HEK293 (cell line): ENCODE measurements at regions of chr11 and their contacts with region 1.

Region 1: DNA sequence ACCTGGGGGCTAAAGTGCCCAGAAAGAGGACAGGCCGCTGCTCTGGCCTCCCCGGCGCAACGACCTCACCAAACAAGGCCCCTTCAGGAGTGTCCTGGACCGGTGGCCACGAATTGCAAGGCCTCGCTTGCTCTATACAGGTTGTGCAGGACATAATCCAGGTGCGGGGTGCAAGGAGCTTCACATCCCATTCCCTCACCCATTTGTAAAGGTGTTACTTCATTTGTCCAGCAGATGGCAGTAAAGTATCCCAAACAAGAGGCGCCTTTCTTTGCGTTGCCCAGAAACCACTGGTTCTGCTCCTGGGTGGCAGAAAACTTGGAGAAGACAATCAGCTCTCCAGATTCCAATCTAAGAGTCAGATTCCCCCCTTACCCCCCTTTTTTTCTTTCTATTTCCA is 35.9 kb upstream of the PRDM11 start:
- H3K4me3 ChIP-seq: no peak overlapping the region
- H3K27ac ChIP-seq: no peak overlapping the region
- H3K4me1 ChIP-seq: no peaks in the 10 kb centered on the region
- CTCF ChIP-seq: peak; percentile 26; the same call in 1 of the 2 replicates

Region 2: DNA sequence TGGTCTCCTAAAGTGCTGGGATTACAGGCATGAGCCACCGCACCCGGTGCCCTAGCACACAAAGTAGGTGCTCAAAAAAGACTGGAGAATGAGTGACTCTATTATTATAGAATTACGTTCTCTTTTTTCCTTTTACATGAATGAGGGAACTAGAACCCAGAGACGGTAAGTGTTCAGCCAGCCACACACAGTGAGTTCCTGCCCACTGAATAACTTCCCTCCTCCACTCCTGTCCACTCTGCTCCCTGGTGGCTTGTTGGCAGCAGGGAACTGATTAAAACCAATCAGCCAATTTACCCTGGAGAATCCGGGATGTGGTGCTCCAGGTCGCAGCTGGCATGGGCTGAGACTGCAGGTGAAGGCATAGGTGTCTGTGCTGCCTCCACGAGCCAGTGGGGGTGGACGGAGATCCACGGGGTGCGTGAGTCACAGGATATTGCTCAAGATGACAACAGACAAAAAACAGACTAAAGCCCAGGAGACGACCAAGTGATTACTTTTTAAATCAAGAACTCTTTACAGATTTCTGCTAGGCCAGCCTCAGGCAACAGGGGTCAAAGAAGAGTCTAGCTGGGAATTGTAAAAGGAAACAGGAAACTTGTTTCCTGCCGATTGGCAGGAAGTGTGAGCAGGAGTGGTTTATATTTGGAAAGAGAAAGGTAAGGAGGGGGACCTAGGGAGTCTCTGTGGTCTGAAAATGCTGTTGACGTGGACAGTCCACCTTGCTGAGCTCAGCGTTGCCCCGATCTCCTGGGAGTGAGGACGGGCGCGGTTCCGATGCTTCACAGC is 64.7 kb before region 1 on chr11:
- CTCF ChIA-PET with region 1: no interaction called
- POLR2A ChIA-PET with region 1: no interaction called
- H3K4me3 ChIP-seq: no peak overlapping the region
- H3K27ac ChIP-seq: no peak overlapping the region
- H3K4me1 ChIP-seq: no peaks in the 10 kb centered on the region
- CTCF ChIP-seq: no peak

Region 3: DNA sequence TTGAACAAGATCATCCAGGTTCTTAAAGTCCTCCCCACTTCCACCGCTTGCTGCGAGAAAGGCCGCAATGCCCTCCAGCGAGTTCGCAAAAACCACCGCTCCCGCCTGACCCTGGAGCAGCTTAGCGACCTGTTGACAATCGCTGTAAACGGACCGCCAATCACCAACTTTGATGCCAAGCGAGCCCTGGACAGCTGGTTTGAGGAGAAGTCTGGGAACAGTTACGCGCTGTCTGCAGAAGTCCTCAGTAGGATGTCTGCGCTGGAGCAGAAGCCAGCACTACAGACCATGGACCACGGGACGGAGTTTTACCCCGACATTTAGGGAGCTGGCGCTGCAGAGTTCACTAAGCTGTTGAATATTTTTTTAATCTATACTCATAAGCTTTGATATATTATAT is 117.3 kb after region 1 on chr11:
- CTCF ChIA-PET with region 1: interaction called, 17 read pairs
- POLR2A ChIA-PET with region 1: no interaction called
- H3K4me3 ChIP-seq: no peak overlapping the region
- H3K27ac ChIP-seq: no peak overlapping the region
- H3K4me1 ChIP-seq: no peaks in the 10 kb centered on the region
- CTCF ChIP-seq: no peak

Region 4: GRCh38 chr11:45252134-45252855 is 141.7 kb after region 1 on chr11:
- CTCF ChIA-PET with region 1: interaction called, 19 read pairs
- POLR2A ChIA-PET with region 1: no interaction called
- H3K4me3 ChIP-seq: no peak overlapping the region
- H3K27ac ChIP-seq: no peak overlapping the region
- H3K4me1 ChIP-seq: no peaks in the 10 kb centered on the region
- CTCF ChIP-seq: 0 out of 2 replicates have a peak, but pooled peaks have one; percentile 21

Region 5: GRCh38 chr11:45285930-45286632 is 175.5 kb after region 1 on chr11 and contains the start of gene SYT13:
- CTCF ChIA-PET with region 1: interaction called, 77 read pairs
- POLR2A ChIA-PET with region 1: no interaction called
- H3K4me3 ChIP-seq: no peak within 1 kb of the TSS
- H3K27ac ChIP-seq: no peak within 1 kb of the TSS
- H3K4me1 ChIP-seq: no peaks in the 10 kb centered on the region
- CTCF ChIP-seq: no peak

Region 6: GRCh38 chr11:45304111-45304991 is 193.8 kb after region 1 on chr11:
- CTCF ChIA-PET with region 1: interaction called, 22 read pairs
- POLR2A ChIA-PET with region 1: no interaction called
- H3K4me3 ChIP-seq: no peak overlapping the region
- H3K27ac ChIP-seq: no peak overlapping the region
- H3K4me1 ChIP-seq: no peaks in the 10 kb centered on the region
- CTCF ChIP-seq: no peak

Region 7: GRCh38 chr11:45332276-45332934 is 221.8 kb after region 1 on chr11:
- CTCF ChIA-PET with region 1: interaction called, 147 read pairs
- POLR2A ChIA-PET with region 1: no interaction called
- H3K4me3 ChIP-seq: no peak overlapping the region
- H3K27ac ChIP-seq: no peak overlapping the region
- H3K4me1 ChIP-seq: no peaks in the 10 kb centered on the region
- CTCF ChIP-seq: no peak